Astrocyte of the cerebellum (primary cell): ENCODE measurements at regions of chr5 and their contacts with region 1.

Region 1: GRCh38 chr5:59348186-59348585 is 545.3 kb downstream of the PDE4D start:
- DNase-seq: no peak
- H3K4me3 ChIP-seq: no peak overlapping the region
- CTCF ChIP-seq: no peak

Region 2: GRCh38 chr5:59238126-59238902 is 109.9 kb before region 1 on chr5:
- in situ Hi-C with region 1: loop called (anchors 10 kb)
- DNase-seq: no peak
- H3K4me3 ChIP-seq: no peak overlapping the region
- CTCF ChIP-seq: no peak